PC-3 (cell line): ENCODE measurements at regions of chr1 and their contacts with region 1.

Region 1: GRCh38 chr1:111600886-111601386 is 18.7 kb upstream of the RAP1A start:
- DNase-seq: no peak
- ATAC-seq: no peak
- H3K4me3 ChIP-seq: no peak overlapping the region
- H3K27ac ChIP-seq: no peak overlapping the region
- H3K4me1 ChIP-seq: peaks cover 15% of the 10 kb centered on the region
- H3K27me3 ChIP-seq: no peaks in the 10 kb centered on the region
- CTCF ChIP-seq: no peak

Region 2: DNA sequence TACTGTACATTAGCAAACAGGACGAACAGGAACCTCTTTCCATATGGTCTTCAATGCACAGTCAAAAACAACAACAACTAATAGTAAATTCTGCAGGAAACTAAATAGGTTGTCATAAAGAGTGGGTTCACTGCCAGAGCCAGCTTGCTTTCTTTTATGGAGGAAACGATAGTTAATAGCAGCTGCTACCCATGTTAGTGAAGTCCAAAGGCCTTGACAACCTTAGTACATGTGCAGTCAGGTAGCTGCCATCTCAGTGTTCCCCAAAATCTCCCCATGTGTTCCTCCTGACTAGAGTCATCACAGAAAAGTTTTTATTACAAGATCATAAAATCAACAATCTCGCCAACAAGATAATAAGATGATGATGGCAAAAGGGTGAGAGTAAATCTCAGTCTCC is 80.9 kb before region 1 on chr1:
- CTCF ChIA-PET with region 1: no interaction called
- POLR2A ChIA-PET with region 1: no interaction called
- intact Hi-C with region 1: no loop called
- DNase-seq: no peak
- ATAC-seq: no peak
- H3K4me3 ChIP-seq: no peak overlapping the region
- H3K27ac ChIP-seq: no peak overlapping the region
- H3K4me1 ChIP-seq: no peaks in the 10 kb centered on the region
- H3K27me3 ChIP-seq: no peaks in the 10 kb centered on the region
- CTCF ChIP-seq: no peak

Region 3: GRCh38 chr1:111619635-111620440 is 18.9 kb after region 1 on chr1 and contains the start of gene RAP1A:
- CTCF ChIA-PET with region 1: no interaction called
- POLR2A ChIA-PET with region 1: interaction called, 20 read pairs
- intact Hi-C with region 1: no loop called
- DNase-seq: peak; percentile 92
- ATAC-seq: peak; percentile 89
- H3K4me3 ChIP-seq: peak within 1 kb of the TSS; percentile 94
- H3K27ac ChIP-seq: peak within 1 kb of the TSS; percentile 34
- H3K4me1 ChIP-seq: peaks cover 18% of the 10 kb centered on the region
- H3K27me3 ChIP-seq: no peaks in the 10 kb centered on the region
- CTCF ChIP-seq: no peak
- total RNA-seq, gene RAP1A: 19.0 TPM in 2 replicates